OCI-LY7 (cell line): ENCODE measurements at regions of chr19 and their contacts with region 1.

Region 1: DNA sequence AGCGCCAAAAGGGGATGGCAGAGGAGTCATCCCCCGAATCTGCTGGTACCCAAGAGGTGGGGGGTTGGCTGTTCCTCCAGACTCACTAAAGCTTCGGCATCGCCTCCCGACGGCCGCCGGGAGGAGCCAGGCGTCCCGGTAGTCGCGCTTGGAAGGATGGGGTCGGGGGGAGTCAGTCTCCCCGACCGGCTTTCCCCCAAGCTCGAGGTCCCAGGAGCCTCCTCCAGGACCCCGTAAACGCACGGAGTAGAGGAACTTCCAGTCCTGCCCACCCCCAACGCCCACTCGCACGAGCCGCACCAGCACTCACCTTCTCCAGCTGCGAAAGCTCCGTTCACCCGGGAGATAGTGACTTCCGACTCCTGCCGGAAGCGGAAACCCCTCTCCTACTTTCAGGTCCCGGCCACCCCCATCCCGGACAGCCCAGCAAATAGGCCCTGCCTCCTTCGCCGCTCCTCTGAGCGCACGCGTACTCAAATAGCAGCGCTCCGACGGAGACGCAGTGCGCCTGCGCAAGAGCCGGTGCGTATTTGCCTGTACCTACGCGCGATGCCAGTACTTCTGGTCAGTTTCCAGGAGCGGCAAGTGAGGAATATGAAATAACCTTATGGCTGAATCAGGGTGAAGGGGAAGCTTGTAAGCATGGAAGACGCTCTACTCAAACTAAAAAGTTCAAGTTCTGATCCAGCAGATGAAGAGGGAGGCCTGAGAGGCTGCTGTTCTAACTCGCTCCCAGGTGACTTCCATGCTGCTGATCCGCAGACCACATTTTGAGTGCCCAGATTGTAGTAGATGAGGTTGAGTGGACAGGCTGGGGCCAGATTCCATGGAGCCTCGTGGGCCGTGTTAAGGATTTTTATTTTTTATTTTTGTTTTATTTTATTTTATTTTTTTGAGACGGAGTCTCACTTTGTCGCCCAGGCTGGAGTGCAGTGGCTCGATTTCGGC is at the start of gene ELOF1:
- DNase-seq: peak; percentile 99
- H3K4me3 ChIP-seq: peak within 1 kb of the TSS; percentile 96
- H3K27ac ChIP-seq: peak within 1 kb of the TSS; percentile 73
- H3K4me1 ChIP-seq: peaks cover 56% of the 10 kb centered on the region
- CTCF ChIP-seq: peak; percentile 55
- total RNA-seq, gene ELOF1: 48.9 and 60.5 TPM in 2 replicates

Region 2: GRCh38 chr19:11570039-11570462 is 10.9 kb after region 1 on chr19:
- CTCF ChIA-PET with region 1: no interaction called
- POLR2A ChIA-PET with region 1: interaction called, 10 read pairs
- intact Hi-C with region 1: no loop called
- DNase-seq: peak; percentile 64
- H3K4me3 ChIP-seq: no peak overlapping the region
- H3K27ac ChIP-seq: peak overlapping the region; percentile 45
- H3K4me1 ChIP-seq: peaks cover 44% of the 10 kb centered on the region
- CTCF ChIP-seq: no peak